ENCODE measurements at regions of chr10 and their contacts with region 1.

Region 1: DNA sequence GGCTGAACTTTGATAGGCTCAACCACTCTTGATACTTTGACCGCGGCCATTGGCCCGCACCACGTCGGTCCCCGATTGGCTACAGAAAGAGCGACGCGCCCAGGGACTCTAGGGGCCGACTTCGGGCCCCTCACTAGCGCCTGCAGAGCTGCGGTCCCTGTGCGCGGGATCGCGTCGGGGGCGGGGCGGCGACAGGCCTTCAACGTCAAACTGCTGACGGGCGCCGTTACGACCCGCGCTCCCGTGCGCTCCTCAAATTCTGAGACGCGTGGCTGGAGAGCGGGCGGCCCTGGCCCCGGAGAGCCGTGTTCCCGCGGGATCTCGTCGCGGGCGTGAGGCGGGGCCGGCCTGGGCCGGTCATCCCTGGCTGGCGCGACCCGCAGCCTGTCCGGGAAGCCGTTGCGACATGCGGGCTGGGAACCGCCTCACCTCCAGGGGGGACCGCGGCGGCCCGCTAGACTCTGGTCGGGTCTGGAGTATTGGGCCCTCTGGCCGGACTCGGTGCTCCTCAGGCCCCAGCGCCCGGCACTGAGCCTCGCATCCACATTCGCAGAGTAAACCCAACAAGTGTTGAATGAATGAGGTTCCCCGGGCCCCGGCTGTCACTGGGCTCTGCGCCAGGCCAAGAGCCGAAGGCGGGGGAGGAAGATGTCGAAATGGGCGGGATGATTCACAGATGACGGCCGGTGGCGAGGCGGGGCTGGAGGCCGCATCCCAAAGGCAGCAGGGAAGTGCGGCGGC is 644 bp upstream of the SLC25A28 start:
- DNase-seq: peak; percentile 98
- H3K4me3 ChIP-seq: peak overlapping the region; percentile 49 to 92 (median 84)
- H3K27ac ChIP-seq: peak overlapping the region; percentile 93 to 97 (median 96)
- H3K4me1 ChIP-seq: peaks cover 0 to 49% (median 42%) of the 10 kb centered on the region in 4 donors
- H3K27me3 ChIP-seq: no peaks in the 10 kb centered on the region
- CTCF ChIP-seq: no peak
- EP300 ChIP-seq: peak in 1 of 4 donors; percentile 66
- POLR2A ChIP-seq: peak; percentile 76 to 77

Region 2: GRCh38 chr10:99430451-99431189 is 190.3 kb before region 1 on chr10 and contains the start of gene GOT1:
- intact Hi-C with region 1: loop called (anchors 2 kb)
- DNase-seq: peak; percentile 99
- H3K4me3 ChIP-seq: peak within 1 kb of the TSS; percentile 63 to 84 (median 72)
- H3K27ac ChIP-seq: peak within 1 kb of the TSS; percentile 90 to 97 (median 94)
- H3K4me1 ChIP-seq: peaks cover 0 to 52% (median 48%) of the 10 kb centered on the region in 4 donors
- H3K27me3 ChIP-seq: no peaks in the 10 kb centered on the region
- CTCF ChIP-seq: no peak
- EP300 ChIP-seq: peak in 2 of 4 donors; percentile 34 to 39
- POLR2A ChIP-seq: peak; percentile 95 to 96
- total RNA-seq, gene GOT1: 13.4 to 29.6 (median 15.4) TPM

Region 3: DNA sequence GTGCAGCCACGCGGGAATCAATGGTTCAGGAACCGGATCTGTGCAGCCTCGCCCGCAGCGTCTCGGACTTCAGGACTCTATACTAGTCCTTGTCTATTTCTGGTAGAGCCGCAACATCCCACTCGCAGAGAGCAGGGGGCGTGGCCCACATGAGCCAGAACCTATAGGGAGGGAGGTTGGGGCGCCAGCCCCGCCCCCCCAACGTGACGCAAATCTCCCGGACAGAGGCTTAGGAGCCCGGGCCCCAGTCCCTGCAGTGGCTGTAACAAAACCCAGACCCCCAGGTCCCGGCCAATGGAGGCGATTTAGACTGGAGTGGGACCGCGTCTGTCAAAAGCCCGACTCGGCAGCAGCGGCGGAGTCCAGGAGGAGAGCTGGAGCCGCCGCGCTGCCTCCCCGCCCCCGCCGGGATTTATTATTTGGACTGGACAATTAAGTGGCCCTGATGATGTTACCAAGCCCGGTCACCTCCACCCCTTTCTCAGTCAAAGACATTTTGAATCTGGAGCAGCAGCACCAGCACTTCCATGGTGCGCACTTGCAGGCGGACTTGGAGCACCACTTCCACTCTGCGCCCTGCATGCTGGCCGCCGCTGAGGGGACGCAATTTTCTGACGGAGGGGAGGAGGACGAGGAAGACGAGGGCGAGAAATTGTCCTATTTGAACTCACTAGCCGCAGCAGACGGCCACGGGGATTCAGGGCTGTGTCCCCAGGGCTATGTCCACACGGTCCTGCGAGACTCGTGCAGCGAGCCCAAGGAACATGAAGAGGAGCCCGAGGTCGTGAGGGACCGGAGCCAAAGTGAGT is 88.0 kb before region 1 on chr10 and contains the start of gene NKX2-3:
- intact Hi-C with region 1: loop called (anchors 2 kb)
- DNase-seq: peak; percentile 100
- H3K4me3 ChIP-seq: peak within 1 kb of the TSS; percentile 70 to 80 (median 78)
- H3K27ac ChIP-seq: peak within 1 kb of the TSS in 3 of 4 donors; percentile 94 to 95 (median 94)
- H3K4me1 ChIP-seq: peaks cover 3 to 36% (median 7%) of the 10 kb centered on the region in 4 donors
- H3K27me3 ChIP-seq: peaks cover 0 to 10% (median 0%) of the 10 kb centered on the region in 3 donors
- CTCF ChIP-seq: no peak
- EP300 ChIP-seq: peak in 1 of 4 donors; percentile 66
- POLR2A ChIP-seq: peak; percentile 89 to 93
- total RNA-seq, gene NKX2-3: 32.4 to 49.9 (median 34.1) TPM

Region 4: DNA sequence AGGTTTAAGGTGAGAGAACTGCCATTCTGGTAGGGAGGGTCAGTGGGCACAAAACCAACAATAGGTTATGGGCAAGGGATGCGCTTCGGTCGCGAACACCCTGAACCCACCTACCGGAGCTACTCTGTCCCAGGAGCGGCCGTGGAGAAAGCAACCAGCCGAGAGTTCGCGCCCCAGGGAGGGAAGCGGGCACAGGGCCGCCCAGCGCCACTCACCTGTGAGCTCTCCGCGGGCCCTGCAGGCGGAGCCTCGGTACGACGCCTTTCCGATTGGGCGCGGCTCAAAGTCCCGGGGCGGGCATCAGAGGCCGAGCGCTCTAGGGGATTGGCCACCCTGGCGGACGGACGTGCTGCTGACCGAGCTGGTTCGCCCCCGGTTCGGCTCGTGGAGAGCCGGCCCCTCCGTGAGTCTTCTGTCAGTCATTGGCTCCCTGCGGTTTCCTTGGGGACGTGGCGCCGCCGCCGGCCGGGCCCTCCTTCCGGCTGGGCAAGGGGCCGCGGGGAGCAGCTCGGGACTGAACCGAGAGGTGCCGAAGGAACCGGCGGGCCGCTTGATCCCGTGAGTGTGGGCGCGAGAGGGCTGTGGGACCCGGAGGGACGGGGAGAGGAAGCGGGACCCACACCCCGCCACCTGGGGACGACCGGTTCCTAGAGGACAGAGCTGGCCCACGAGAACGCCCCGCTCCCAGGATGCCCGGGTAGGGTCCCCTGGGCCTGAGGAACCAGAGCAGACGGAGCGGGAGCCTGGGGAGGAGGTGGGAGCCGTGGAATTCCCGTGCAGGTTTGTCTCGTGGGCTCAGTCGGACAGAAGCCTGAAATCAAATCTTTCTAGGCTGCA is 38.4 kb after region 1 on chr10 and contains the start of gene ENTPD7:
- intact Hi-C with region 1: loop called (anchors 2 kb)
- DNase-seq: peak; percentile 96
- H3K4me3 ChIP-seq: peak within 1 kb of the TSS; percentile 71 to 91 (median 78)
- H3K27ac ChIP-seq: peak within 1 kb of the TSS; percentile 9 to 64 (median 50)
- H3K4me1 ChIP-seq: peaks cover 0 to 21% (median 14%) of the 10 kb centered on the region in 4 donors
- H3K27me3 ChIP-seq: no peaks in the 10 kb centered on the region
- CTCF ChIP-seq: peak in 3 of 4 experiments; percentile 48 to 66 (median 50)
- EP300 ChIP-seq: no peak
- POLR2A ChIP-seq: peak in 1 of 2 donors; percentile 42
- total RNA-seq, gene ENTPD7: 2.9 to 5.5 (median 3.9) TPM

Region 5: DNA sequence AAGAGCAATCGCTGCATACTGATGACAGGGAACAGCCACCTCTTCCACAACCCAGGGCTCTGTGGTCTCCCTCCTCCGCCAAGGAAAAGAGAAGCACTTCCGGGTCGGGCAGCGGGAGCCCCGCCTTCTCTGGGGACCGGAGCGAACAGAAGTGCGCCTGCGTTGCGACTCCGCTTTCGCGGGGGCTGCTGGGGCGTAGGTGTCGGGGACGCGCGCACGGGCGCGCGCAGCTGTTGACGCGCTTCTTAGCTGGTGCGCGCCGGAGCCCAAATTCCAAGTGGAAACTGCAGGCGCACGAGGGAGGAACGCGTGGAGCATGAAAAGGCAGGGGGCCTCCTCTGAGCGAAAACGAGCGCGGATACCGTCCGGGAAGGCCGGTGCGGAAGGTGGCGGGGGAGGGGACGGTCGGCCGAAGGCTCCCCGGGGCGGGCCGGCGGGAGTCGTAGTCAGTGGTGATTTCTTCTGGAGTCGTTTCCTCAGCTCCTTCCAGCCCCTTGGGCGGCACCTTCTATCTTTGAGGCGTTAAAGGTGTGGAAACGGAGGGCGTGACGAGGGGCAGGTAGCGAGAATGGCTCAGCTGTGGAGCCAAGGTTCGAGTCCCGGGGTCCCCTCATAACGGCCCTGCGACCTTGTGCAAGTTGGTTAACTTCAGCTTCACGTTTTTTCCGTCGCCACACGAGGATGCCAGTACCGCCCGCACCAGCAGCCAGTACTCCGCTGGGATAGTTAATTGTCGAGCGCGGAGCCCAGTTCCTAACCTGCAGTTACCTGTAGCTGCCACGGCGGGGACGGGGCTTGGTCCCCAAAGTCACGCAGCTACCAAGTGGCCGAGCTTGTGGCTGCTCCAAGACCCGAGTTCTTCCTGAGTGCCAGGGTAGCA is 111.4 kb after region 1 on chr10 and contains the starts of genes COX15 and CUTC:
- intact Hi-C with region 1: loop called (anchors 1 kb)
- DNase-seq: peak; percentile 99
- H3K4me3 ChIP-seq: peak within 1 kb of the TSS; percentile 74 to 93 (median 78)
- H3K27ac ChIP-seq: peak within 1 kb of the TSS; percentile 88 to 96 (median 95)
- H3K4me1 ChIP-seq: peaks cover 0 to 32% (median 22%) of the 10 kb centered on the region in 4 donors
- H3K27me3 ChIP-seq: no peaks in the 10 kb centered on the region
- CTCF ChIP-seq: peak in 2 of 4 experiments; percentile 11 to 22
- EP300 ChIP-seq: peak in 1 of 4 donors; percentile 78
- POLR2A ChIP-seq: peak; percentile 68 to 84
- total RNA-seq, gene COX15: 23.0 to 35.0 (median 27.3) TPM
- total RNA-seq, gene CUTC: 29.4 to 30.7 (median 30.0) TPM

Measured in sigmoid colon (tissue), 7 donors.